ENCODE measurements at regions of chr4 and their contacts with region 1.

Region 1: GRCh38 chr4:3193531-3194203 is 55.3 kb upstream of the MSANTD1 start:
- DNase-seq: peak in 3 of 14 experiments; percentile 47 to 60 (median 48)
- ATAC-seq: peak; percentile 38
- H3K4me3 ChIP-seq: no peak overlapping the region
- H3K4me3 Mint-ChIP-seq: peak overlapping the region; percentile 16
- H3K27ac ChIP-seq: no peak overlapping the region
- H3K27ac Mint-ChIP-seq: peak overlapping the region; percentile 9
- H3K4me1 ChIP-seq: peaks cover 53% of the 10 kb centered on the region
- H3K4me1 Mint-ChIP-seq: peaks cover 58% of the 10 kb centered on the region
- H3K27me3 ChIP-seq: no peaks in the 10 kb centered on the region
- H3K27me3 Mint-ChIP-seq: no peaks in the 10 kb centered on the region
- CTCF ChIP-seq: peak; percentile 70

Region 2: GRCh38 chr4:3442959-3443749 is 249.5 kb after region 1 on chr4:
- CTCF ChIA-PET with region 1: no interaction called
- POLR2A ChIA-PET with region 1: no interaction called
- intact Hi-C with region 1: loop called (anchors 1 kb)
- DNase-seq: peak; percentile 38 to 83 (median 58)
- ATAC-seq: peak; percentile 86
- H3K4me3 ChIP-seq: no peak overlapping the region
- H3K4me3 Mint-ChIP-seq: no peak overlapping the region
- H3K27ac ChIP-seq: no peak overlapping the region
- H3K27ac Mint-ChIP-seq: no peak overlapping the region
- H3K4me1 ChIP-seq: peaks cover 11% of the 10 kb centered on the region
- H3K4me1 Mint-ChIP-seq: no peaks in the 10 kb centered on the region
- H3K27me3 ChIP-seq: no peaks in the 10 kb centered on the region
- H3K27me3 Mint-ChIP-seq: no peaks in the 10 kb centered on the region
- CTCF ChIP-seq: peak; percentile 88

Region 3: GRCh38 chr4:3480528-3481112 is 287.0 kb after region 1 on chr4:
- CTCF ChIA-PET with region 1: no interaction called
- POLR2A ChIA-PET with region 1: no interaction called
- intact Hi-C with region 1: loop called in 1 of 2 experiments (anchors 2 kb)
- DNase-seq: peak; percentile 47 to 80 (median 66)
- ATAC-seq: peak; percentile 88
- H3K4me3 ChIP-seq: no peak overlapping the region
- H3K4me3 Mint-ChIP-seq: no peak overlapping the region
- H3K27ac ChIP-seq: no peak overlapping the region
- H3K27ac Mint-ChIP-seq: no peak overlapping the region
- H3K4me1 ChIP-seq: peaks cover 22% of the 10 kb centered on the region
- H3K4me1 Mint-ChIP-seq: no peaks in the 10 kb centered on the region
- H3K27me3 ChIP-seq: peaks cover 24 to 27% of the 10 kb centered on the region in 2 experiments
- H3K27me3 Mint-ChIP-seq: peaks cover 27% of the 10 kb centered on the region
- CTCF ChIP-seq: peak; percentile 94

Region 4: GRCh38 chr4:3880615-3881120 is 687.0 kb after region 1 on chr4:
- CTCF ChIA-PET with region 1: no interaction called
- POLR2A ChIA-PET with region 1: no interaction called
- intact Hi-C with region 1: loop called (anchors 5 to 10 kb)
- DNase-seq: peak; percentile 48 to 79 (median 60)
- ATAC-seq: peak; percentile 81
- H3K4me3 ChIP-seq: peak overlapping the region; percentile 34
- H3K4me3 Mint-ChIP-seq: peak overlapping the region; percentile 49
- H3K27ac ChIP-seq: no peak overlapping the region
- H3K27ac Mint-ChIP-seq: no peak overlapping the region
- H3K4me1 ChIP-seq: peaks cover 16% of the 10 kb centered on the region
- H3K4me1 Mint-ChIP-seq: peaks cover 19% of the 10 kb centered on the region
- H3K27me3 ChIP-seq: peaks cover 18 to 25% of the 10 kb centered on the region in 2 experiments
- H3K27me3 Mint-ChIP-seq: peaks cover 58% of the 10 kb centered on the region
- CTCF ChIP-seq: peak; percentile 52

Measured in CD4-positive, alpha-beta T cell (primary cell).